ENCODE measurements at regions of chr9 and their contacts with region 1.

Region 1: GRCh38 chr9:19493174-19493811 is 84.5 kb downstream of the ACER2 start:
- DNase-seq: peak; percentile 63 to 97 (median 74)

Region 2: GRCh38 chr9:19551124-19551929 is 58.0 kb after region 1 on chr9:
- intact Hi-C with region 1: loop called (anchors 10 kb)
- DNase-seq: peak in 2 of 10 donors; percentile 66 to 83

Region 3: DNA sequence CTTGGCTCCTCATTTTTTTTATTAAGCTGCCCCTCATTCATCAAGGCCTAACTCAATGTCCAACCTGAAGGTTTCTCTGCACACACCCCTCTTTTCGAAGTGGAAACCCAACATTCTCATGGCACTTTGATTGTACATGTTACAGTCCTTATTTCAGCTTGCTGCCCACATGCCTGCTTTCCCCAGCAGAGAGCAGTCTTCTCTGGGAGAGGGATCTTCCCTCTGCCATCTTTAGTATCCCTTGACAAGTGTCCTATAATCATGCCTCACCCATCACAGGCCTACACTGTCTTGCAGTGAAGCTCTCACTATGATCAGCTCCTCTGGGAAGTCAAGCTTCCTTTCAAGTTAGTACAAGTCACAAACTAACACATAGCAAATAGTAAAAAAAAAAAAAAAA is 90.6 kb after region 1 on chr9:
- intact Hi-C with region 1: no loop called
- DNase-seq: no peak

Region 4: DNA sequence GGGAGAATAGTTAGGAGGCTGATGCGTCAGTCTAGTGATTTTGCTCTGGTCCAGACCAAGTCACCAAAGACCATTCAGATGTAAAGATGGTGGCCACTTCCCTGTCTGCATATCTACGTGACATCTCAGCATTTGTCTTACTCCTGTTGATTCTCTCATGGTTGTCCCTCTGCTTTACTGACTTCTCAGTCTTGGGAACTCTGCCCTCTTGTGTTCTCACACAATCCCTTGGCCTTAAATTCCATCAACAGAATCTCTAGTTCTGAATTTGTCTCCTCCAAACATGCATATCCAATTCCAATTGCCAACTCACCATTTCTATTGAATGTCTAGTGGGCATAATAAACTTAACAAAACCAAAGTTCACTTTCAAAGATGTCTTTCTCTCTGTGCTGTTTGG is 147.8 kb after region 1 on chr9:
- intact Hi-C with region 1: loop called (anchors 10 kb)
- DNase-seq: peak in 1 of 10 donors; percentile 31

Region 5: DNA sequence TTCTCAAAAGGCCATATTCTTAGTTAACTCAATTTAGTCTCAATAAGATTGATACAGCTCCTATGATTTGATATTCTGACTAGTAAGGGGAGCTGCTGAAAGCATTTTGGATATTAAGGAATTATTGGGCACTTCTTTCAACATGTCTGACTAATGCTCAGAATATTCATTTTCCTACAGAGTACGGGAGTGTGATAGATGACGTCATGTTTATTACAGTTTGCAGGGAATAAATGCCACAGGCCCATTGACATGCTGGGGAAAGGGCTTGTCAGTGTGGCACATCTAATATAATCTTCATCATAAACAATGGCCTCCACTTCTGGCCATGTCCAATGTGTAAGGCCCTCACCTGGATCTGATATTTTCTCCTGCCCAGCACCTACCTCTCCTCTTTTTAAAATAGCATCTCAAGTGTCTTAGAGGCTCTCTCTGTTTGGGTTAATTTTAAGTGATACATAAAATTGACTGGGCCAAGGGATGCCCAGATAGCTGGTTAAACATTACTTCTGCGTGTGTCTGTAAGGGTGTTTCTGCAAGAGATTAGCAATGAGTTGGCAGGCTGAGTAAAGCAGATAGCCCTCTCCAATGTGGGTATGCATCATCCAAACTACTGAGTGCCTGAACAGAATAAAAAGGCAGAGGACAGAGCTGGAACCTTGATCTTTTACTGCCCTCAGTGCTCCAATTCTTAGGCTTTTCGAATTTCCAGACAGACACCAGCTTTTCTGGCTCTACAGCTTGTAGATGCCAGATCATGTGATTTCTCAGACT is 196.2 kb after region 1 on chr9:
- intact Hi-C with region 1: loop called (anchors 10 kb)
- DNase-seq: no peak

Region 6: GRCh38 chr9:19788614-19789271 is 295.4 kb after region 1 on chr9 and contains the start of gene SLC24A2:
- intact Hi-C with region 1: loop called (anchors 5 kb)
- DNase-seq: peak; percentile 53 to 96 (median 71)

Measured in posterior cingulate gyrus (tissue), 11 donors.